Activated CD4-positive, alpha-beta memory T cell treated with anti-CD3 and anti-CD28 coated beads, Interleukin-2, amount 10 ng/mL, durations not matched to agents 7 days and 5 days (primary cell): ENCODE measurements at regions of chr12 and their contacts with region 1.

Region 1: DNA sequence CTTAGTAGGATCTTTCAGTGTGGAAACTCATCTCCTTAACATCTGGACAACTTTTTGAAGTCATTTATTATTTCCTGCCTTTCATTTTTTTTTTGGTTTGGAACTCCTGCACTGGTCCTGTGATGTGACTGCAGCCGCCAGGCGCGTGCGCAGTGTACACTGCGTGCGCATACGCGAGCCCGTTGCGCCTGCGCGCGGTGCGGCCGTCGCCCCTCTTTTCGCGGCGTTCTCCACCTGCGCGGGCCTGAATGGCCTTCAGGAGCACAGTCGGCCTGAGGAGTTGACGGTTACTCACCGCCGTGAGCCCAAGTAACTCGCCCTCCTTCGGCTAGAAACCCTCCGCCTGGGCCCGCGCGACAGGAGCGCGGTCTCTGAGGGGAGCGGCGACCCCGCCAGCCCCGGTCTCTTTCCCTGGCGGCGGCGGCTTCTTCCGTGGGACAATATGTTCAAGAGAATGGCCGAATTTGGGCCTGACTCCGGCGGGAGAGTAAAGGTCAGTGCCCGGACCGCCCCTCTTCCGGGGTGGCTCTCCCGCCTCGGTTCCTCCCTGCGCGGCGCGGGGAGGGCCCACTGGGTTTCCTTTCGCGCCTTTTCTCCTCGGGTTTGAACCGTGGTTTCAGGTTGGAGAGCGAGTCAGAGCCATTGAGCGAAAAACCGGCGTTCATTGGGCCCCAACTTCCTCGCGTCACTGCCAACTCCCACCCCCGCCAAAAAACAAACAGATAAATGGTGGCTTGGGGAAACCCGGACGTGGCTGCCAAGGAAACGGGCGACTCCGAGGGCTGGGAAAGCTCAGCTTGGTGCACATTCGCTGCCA is at the start of gene YEATS4:
- DNase-seq: peak; percentile 91
- H3K4me3 Mint-ChIP-seq: peak within 1 kb of the TSS; percentile 92
- H3K27ac Mint-ChIP-seq: peak within 1 kb of the TSS; percentile 89
- H3K4me1 Mint-ChIP-seq: peaks cover 36% of the 10 kb centered on the region
- H3K27me3 Mint-ChIP-seq: peaks cover 3% of the 10 kb centered on the region
- total RNA-seq, gene YEATS4: 43.0 to 45.0 TPM

Region 2: DNA sequence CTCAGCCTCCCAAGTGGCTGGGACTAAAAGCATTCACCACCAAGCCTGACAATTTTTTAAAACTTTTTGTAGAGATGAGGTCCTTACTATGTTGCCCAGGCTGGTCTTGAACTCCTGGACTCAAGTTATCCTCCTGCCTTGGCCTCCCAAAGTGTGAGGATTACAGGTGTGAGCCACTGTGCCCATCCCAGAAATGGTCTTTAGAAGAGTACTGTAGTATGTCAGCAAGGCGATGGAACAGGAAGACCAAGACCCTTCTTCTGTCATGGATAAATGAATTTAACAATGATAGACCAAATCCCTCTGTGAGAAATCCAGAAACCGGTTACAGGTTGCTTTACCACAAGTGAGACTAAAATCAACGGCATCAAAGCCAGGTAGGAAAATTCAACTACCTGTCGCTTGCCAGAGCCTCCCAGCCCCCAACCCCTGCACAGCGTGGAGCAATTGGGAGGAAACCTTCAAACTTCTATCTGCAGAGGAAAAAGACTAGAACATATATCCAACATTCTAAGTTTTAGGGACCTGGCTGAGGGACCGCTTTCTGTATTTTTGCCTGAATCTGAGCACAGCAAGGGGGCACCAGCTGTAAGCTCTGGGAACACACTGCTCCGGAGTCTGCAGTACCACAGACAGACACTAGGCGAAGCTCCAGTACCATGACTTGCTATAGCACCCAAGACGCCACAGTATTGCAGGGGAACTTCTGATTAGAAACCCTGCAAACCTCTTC is 69.0 kb before region 1 on chr12:
- CTCF ChIA-PET with region 1: interaction called, 24 read pairs
- POLR2A ChIA-PET with region 1: no interaction called
- DNase-seq: peak; percentile 83
- H3K4me3 Mint-ChIP-seq: no peak overlapping the region
- H3K27ac Mint-ChIP-seq: no peak overlapping the region
- H3K4me1 Mint-ChIP-seq: peaks cover 5% of the 10 kb centered on the region
- H3K27me3 Mint-ChIP-seq: peaks cover 41% of the 10 kb centered on the region

Region 3: GRCh38 chr12:69348162-69348938 is 11.4 kb before region 1 on chr12 and contains the start of gene LYZ:
- CTCF ChIA-PET with region 1: interaction called, 14 read pairs
- POLR2A ChIA-PET with region 1: interaction called, 9 read pairs
- DNase-seq: no peak
- H3K4me3 Mint-ChIP-seq: no peak within 1 kb of the TSS
- H3K27ac Mint-ChIP-seq: no peak within 1 kb of the TSS
- H3K4me1 Mint-ChIP-seq: peaks cover 5% of the 10 kb centered on the region
- H3K27me3 Mint-ChIP-seq: peaks cover 2% of the 10 kb centered on the region
- total RNA-seq, gene LYZ: 0.48 to 0.50 TPM

Region 4: DNA sequence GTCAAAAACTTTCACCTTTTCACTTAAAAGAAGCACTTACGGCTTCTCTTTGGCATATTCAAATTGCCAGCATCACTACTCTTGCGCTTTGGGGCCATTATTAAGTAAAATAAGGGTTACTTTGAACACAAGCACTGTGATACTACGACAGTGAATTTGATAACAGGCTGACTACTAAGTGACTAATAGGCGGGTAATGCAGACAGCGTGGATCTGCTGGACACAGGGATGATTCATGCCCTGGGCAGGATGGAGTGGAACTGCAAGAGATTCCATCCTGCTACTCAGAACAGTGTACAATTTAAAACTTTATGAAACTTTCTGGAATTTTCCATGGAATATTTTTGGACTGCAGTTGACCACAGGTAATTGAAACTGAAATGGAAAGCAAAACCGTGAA is 45.7 kb after region 1 on chr12:
- CTCF ChIA-PET with region 1: no interaction called
- POLR2A ChIA-PET with region 1: no interaction called
- DNase-seq: no peak
- H3K4me3 Mint-ChIP-seq: no peak overlapping the region
- H3K27ac Mint-ChIP-seq: no peak overlapping the region
- H3K4me1 Mint-ChIP-seq: no peaks in the 10 kb centered on the region
- H3K27me3 Mint-ChIP-seq: no peaks in the 10 kb centered on the region

Region 5: GRCh38 chr12:69570545-69571399 is 211.0 kb after region 1 on chr12:
- CTCF ChIA-PET with region 1: interaction called, 63 read pairs
- POLR2A ChIA-PET with region 1: interaction called, 3 read pairs
- DNase-seq: peak; percentile 49
- H3K4me3 Mint-ChIP-seq: no peak overlapping the region
- H3K27ac Mint-ChIP-seq: no peak overlapping the region
- H3K4me1 Mint-ChIP-seq: peaks cover 3% of the 10 kb centered on the region
- H3K27me3 Mint-ChIP-seq: no peaks in the 10 kb centered on the region

Region 6: GRCh38 chr12:69585189-69586062 is 225.7 kb after region 1 on chr12 and contains the start of gene CCT2:
- CTCF ChIA-PET with region 1: interaction called, 16 read pairs
- POLR2A ChIA-PET with region 1: interaction called, 15 read pairs
- DNase-seq: peak; percentile 96
- H3K4me3 Mint-ChIP-seq: peak within 1 kb of the TSS; percentile 94
- H3K27ac Mint-ChIP-seq: peak within 1 kb of the TSS; percentile 89
- H3K4me1 Mint-ChIP-seq: peaks cover 33% of the 10 kb centered on the region
- H3K27me3 Mint-ChIP-seq: no peaks in the 10 kb centered on the region
- total RNA-seq, gene CCT2: 131 to 135 TPM

Region 7: GRCh38 chr12:69639400-69640016 is 279.8 kb after region 1 on chr12:
- CTCF ChIA-PET with region 1: interaction called, 46 read pairs
- POLR2A ChIA-PET with region 1: no interaction called
- DNase-seq: peak; percentile 66
- H3K4me3 Mint-ChIP-seq: no peak overlapping the region
- H3K27ac Mint-ChIP-seq: no peak overlapping the region
- H3K4me1 Mint-ChIP-seq: no peaks in the 10 kb centered on the region
- H3K27me3 Mint-ChIP-seq: no peaks in the 10 kb centered on the region